ENCODE measurements at regions of chr7 and their contacts with region 1.

Region 1: GRCh38 chr7:78448911-78449310 is 650.3 kb downstream of the PHTF2 start:
- DNase-seq: no peak
- H3K4me3 ChIP-seq: no peak overlapping the region
- H3K27ac ChIP-seq: no peak overlapping the region
- H3K4me1 ChIP-seq: no peaks in the 10 kb centered on the region
- H3K27me3 ChIP-seq: no peaks in the 10 kb centered on the region
- CTCF ChIP-seq: no peak

Region 2: GRCh38 chr7:78399033-78399769 is 49.7 kb before region 1 on chr7:
- CTCF ChIA-PET with region 1: no interaction called
- dilution Hi-C with region 1: no loop called
- in situ Hi-C with region 1: no loop called
- intact Hi-C with region 1: loop called (anchors 10 kb)
- DNase-seq: no peak
- H3K4me3 ChIP-seq: no peak overlapping the region
- H3K27ac ChIP-seq: no peak overlapping the region
- H3K4me1 ChIP-seq: no peaks in the 10 kb centered on the region
- H3K27me3 ChIP-seq: peaks cover 4% of the 10 kb centered on the region
- CTCF ChIP-seq: no peak

Region 3: DNA sequence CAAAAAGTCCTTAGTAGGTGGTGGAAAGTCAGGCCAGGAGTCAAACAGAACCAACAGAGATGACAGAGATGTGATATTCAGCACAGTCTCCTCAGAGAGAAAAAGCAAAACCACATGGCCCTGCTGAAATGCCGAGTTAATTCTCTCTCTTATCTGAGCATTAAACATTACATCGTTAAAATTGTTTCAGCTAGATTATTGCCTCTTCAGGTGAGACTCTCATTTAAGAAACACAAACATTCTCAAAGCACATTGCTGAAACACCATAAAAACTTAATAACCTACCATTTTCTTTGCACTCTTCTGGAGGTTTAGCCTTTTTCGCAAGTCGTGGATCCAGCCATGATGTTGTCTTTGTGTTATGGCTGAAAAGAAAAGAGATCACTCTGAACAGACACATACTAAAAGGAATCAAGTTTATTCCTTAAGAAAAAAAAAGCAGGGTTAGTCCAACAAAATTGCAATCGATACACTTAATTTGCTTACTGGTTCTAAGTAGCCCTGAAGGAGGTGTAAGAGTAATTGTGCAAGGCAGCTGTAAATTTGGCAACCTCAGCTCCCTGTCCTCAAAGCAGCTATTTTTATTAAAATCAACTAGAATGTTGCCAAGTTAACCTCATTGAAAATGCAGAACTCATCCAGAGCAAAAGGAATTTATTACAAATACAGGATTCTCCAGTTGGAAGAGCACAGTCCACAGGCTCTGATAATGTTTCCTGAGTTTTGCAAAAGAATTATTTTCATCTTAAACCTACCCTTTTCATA is 40.7 kb after region 1 on chr7:
- CTCF ChIA-PET with region 1: no interaction called
- dilution Hi-C with region 1: loop called (anchors 5 kb)
- in situ Hi-C with region 1: no loop called
- intact Hi-C with region 1: no loop called
- DNase-seq: no peak
- H3K4me3 ChIP-seq: no peak overlapping the region
- H3K27ac ChIP-seq: no peak overlapping the region
- H3K4me1 ChIP-seq: no peaks in the 10 kb centered on the region
- H3K27me3 ChIP-seq: no peaks in the 10 kb centered on the region
- CTCF ChIP-seq: no peak